ENCODE measurements at regions of chr1 and their contacts with region 1.

Region 1: DNA sequence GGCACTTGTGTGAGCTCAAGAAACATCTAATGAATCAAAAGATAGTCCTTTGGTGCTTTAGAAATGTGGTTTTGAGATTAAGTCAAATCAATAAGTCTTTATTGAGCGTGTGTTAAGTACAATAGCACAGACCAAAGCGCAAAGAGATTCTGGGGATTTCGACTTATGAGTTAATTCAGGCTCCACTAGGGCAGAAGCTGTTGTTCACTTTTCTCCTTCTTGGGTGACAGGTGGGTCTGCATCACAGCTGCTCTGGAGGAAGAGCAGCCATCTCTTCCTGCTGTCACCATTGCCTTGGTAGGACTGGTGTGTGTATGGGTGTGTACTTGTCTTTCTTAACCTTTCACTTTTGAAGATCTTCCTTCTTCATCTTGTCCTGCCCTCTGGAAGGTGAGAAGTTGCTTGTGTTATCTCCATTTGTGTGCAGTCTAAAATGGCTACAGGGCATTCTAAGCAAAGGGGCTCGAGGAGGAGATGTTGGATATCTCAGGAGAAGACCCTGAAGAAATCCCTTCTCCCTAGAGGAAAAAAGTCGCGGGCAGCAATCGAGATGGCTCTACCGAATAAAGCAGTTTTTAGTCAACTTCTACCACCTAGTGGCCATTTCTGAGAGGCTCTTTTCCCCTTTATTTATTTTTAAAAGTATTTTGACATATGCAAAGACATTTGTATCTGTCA is 22.9 kb upstream of the DISC1 start:
- DNase-seq: peak in 2 of 4 donors; percentile 38 to 67
- ATAC-seq: peak; percentile 91
- H3K4me3 ChIP-seq: peak overlapping the region; percentile 18 to 42
- H3K27ac ChIP-seq: peak overlapping the region in 1 of 2 donors; percentile 33
- H3K4me1 ChIP-seq: peaks cover 0 to 23% of the 10 kb centered on the region in 2 donors
- H3K27me3 ChIP-seq: no peaks in the 10 kb centered on the region
- CTCF ChIP-seq: peak; percentile 62 to 85

Region 2: DNA sequence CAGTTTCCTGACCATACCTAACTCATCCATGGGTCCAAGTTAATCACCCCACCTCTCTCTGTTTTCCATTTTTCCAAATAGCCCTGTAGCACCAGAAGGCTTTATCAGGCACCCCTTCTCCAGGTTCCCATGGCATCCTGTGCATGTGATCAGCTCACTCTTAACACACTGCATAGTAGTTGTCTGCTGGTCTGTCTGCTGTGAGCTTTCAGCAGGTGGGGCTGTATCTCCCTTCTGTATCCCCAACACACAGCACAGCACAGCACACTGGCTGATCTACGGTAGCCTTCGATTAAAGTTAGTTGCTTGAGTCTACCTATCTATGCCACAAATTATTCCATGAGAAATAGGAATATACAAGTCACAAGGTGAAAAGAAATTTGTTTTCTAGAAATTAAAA is 681.1 kb before region 1 on chr1:
- intact Hi-C with region 1: loop called in 1 of 2 experiments (anchors 10 kb)
- DNase-seq: no peak
- ATAC-seq: no peak
- H3K4me3 ChIP-seq: no peak overlapping the region
- H3K27ac ChIP-seq: no peak overlapping the region
- H3K4me1 ChIP-seq: no peaks in the 10 kb centered on the region
- H3K27me3 ChIP-seq: no peaks in the 10 kb centered on the region
- CTCF ChIP-seq: no peak

Region 3: GRCh38 chr1:231219422-231220401 is 384.0 kb before region 1 on chr1:
- intact Hi-C with region 1: no loop called
- DNase-seq: no peak
- ATAC-seq: no peak
- H3K4me3 ChIP-seq: no peak overlapping the region
- H3K27ac ChIP-seq: no peak overlapping the region
- H3K4me1 ChIP-seq: no peaks in the 10 kb centered on the region
- H3K27me3 ChIP-seq: peaks cover 0 to 3% of the 10 kb centered on the region in 2 donors
- CTCF ChIP-seq: no peak

Measured in left lung (tissue), 14 donors.